ENCODE measurements at regions of chr17 and their contacts with region 1.

Region 1: DNA sequence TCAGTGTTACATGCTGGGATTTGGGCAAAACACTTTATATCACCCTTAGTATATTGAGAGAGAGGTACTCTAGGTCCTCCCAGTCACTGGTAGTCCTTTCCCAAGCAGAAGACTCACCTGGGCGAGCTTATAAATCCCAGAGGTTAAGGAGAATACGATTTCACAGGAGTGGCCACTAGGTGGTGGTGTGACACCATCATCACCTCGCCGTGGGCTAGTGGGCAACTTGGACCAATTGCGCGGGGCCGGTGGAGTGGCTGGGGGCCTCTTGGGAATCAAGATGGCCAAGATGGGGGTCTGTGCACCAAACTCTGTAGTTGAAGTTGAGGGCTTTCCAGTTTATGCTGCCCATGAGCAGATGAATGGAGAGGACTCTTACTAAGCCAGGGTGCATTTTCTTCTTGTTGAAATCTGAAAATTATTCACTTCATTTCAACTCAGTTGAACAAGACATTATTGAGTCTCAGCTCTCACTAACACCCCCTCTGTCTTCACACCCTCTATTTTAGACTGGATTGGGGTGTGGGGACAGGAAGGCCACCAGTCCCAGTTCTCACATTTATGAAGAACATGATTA is 38.2 kb upstream of the PIRT start:
- DNase-seq: peak; percentile 40
- ATAC-seq: peak; percentile 84
- H3K4me3 ChIP-seq: no peak overlapping the region
- H3K27ac ChIP-seq: no peak overlapping the region
- H3K4me1 ChIP-seq: no peaks in the 10 kb centered on the region
- H3K27me3 ChIP-seq: no peaks in the 10 kb centered on the region
- CTCF ChIP-seq: peak; percentile 86
- EP300 ChIP-seq: no peak
- POLR2A ChIP-seq: no peak
- RAD21 ChIP-seq: peak; percentile 70

Region 2: DNA sequence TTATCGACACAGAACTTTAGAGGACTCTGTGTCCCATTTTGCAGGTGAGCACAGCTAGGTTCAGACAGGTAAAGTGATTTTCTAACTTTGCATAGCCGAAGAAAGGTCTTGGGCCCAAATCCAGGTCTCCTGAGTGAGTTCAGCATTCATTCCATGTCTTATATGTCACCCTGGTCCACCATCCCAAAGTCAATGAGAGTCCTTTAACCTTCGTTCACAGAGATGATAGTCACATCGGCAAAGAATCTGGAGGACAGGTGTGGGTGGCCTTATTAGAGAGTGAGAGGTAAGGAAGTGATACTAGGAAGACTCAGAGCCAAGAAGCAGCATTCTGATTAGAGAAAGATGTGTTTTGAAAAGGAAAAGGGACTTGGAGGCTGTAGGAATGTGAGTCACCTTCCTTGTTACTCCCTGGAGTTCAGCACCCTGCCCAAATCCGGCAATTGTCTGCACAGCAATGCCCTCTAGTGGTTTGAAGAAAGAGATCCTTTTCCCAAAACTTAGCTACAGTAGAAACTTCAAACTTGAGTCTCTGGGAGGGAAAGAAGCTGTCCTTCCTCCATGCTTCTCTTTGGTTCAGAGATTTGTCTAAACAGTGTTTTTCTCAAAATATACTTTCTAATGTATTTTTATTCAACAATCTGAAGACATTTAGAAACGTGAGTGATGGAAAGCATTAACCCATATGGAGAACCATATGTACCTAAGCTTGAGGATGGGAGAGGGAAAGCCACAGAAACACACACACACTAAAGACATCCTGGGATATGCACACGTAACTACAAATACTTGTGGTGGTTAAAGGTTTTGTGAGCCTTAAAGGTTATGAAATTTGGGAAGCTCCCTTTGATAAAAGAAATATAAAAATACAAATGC is 268.5 kb after region 1 on chr17:
- CTCF ChIA-PET with region 1: interaction called, 14 read pairs
- POLR2A ChIA-PET with region 1: no interaction called
- in situ Hi-C with region 1: loop called (anchors 5 kb)
- intact Hi-C with region 1: loop called (anchors 1 kb)
- DNase-seq: peak; percentile 18
- ATAC-seq: peak; percentile 47; the same call in 2 of the 3 replicates
- H3K4me3 ChIP-seq: no peak overlapping the region
- H3K27ac ChIP-seq: no peak overlapping the region
- H3K4me1 ChIP-seq: no peaks in the 10 kb centered on the region
- H3K27me3 ChIP-seq: no peaks in the 10 kb centered on the region
- CTCF ChIP-seq: peak; percentile 78
- EP300 ChIP-seq: no peak
- POLR2A ChIP-seq: no peak
- RAD21 ChIP-seq: no peak

Region 3: GRCh38 chr17:11296994-11297393 is 420.9 kb after region 1 on chr17:
- CTCF ChIA-PET with region 1: interaction called, 6 read pairs
- POLR2A ChIA-PET with region 1: no interaction called
- in situ Hi-C with region 1: loop called (anchors 5 kb)
- intact Hi-C with region 1: loop called (anchors 1 kb)
- DNase-seq: peak; percentile 10
- ATAC-seq: no peak; the same call in 2 of the 3 replicates
- H3K4me3 ChIP-seq: no peak overlapping the region
- H3K27ac ChIP-seq: no peak overlapping the region
- H3K4me1 ChIP-seq: no peaks in the 10 kb centered on the region
- H3K27me3 ChIP-seq: peaks cover 0 to 3% of the 10 kb centered on the region in 2 experiments; a peak in 1 of 5 replicates
- CTCF ChIP-seq: peak; percentile 47
- EP300 ChIP-seq: no peak
- POLR2A ChIP-seq: no peak
- RAD21 ChIP-seq: no peak

Region 4: GRCh38 chr17:11935734-11936406 is 1059.8 kb after region 1 on chr17:
- CTCF ChIA-PET with region 1: no interaction called
- POLR2A ChIA-PET with region 1: no interaction called
- in situ Hi-C with region 1: loop called (anchors 10 kb)
- intact Hi-C with region 1: no loop called
- DNase-seq: peak; percentile 60
- ATAC-seq: peak; percentile 31; the same call in 1 of the 3 replicates
- H3K4me3 ChIP-seq: no peak overlapping the region
- H3K27ac ChIP-seq: no peak overlapping the region
- H3K4me1 ChIP-seq: no peaks in the 10 kb centered on the region
- H3K27me3 ChIP-seq: no peaks in the 10 kb centered on the region
- CTCF ChIP-seq: peak; percentile 81
- EP300 ChIP-seq: no peak
- POLR2A ChIP-seq: no peak
- RAD21 ChIP-seq: peak; percentile 46

Region 5: GRCh38 chr17:11986942-11987329 is 1110.9 kb after region 1 on chr17:
- CTCF ChIA-PET with region 1: interaction called, 3 read pairs
- POLR2A ChIA-PET with region 1: no interaction called
- in situ Hi-C with region 1: loop called (anchors 10 kb)
- intact Hi-C with region 1: loop called (anchors 5 kb)
- DNase-seq: peak; percentile 37
- ATAC-seq: peak; percentile 72
- H3K4me3 ChIP-seq: peak overlapping the region in 2 of 3 experiments; percentile 19 to 38; a peak in 2 of 6 replicates
- H3K27ac ChIP-seq: peak overlapping the region; percentile 64
- H3K4me1 ChIP-seq: peaks cover 35% of the 10 kb centered on the region
- H3K27me3 ChIP-seq: no peaks in the 10 kb centered on the region
- CTCF ChIP-seq: peak; percentile 67
- EP300 ChIP-seq: no peak
- POLR2A ChIP-seq: no peak
- RAD21 ChIP-seq: no peak

Measured in HepG2 (cell line).